B cell (primary cell): ENCODE measurements at regions of chr7 and their contacts with region 1.

Region 1: DNA sequence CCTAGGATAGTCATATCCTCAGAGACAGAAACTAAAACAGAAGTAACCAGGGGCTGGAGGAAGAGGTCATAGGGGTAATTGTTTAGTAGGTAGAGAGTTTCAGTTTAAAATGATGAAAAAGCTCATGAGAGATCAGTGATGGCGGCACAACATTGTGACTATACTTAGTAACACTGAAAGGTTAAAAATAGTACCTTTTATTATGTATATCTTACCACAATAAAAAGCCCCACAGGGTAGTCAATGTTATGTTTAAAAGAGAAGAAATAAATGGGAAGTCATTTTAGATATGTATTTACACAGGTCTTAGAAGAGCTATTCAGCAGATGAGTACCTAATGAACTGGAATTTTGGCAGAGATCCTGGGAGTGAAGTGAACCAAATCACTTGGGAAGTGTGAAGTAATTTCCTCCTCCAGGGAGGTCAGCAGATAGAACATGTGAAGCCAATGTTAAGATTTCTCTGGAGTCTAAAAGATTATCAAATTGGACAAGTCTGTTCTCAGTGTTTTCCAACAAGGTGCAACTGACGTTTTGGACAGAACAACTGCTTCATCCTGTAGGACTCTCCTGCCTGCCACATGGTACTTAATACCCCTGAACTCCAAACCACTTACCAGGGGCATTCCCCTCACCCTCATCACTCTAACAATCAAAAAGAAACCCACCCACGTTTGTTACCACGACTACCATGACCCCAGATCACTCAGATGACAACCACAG is 6.4 kb downstream of the CDCA7L start:
- DNase-seq: peak; percentile 68
- ATAC-seq: peak; percentile 42
- H3K4me3 ChIP-seq: peak overlapping the region in 1 of 5 experiments; percentile 6
- H3K4me3 Mint-ChIP-seq: peak overlapping the region; percentile 46
- H3K27ac ChIP-seq: peak overlapping the region; percentile 60 to 86
- H3K27ac Mint-ChIP-seq: peak overlapping the region; percentile 62
- H3K4me1 ChIP-seq: peaks cover 69 to 96% of the 10 kb centered on the region in 2 donors
- H3K4me1 Mint-ChIP-seq: peaks cover 86% of the 10 kb centered on the region
- H3K27me3 ChIP-seq: no peaks in the 10 kb centered on the region
- H3K27me3 Mint-ChIP-seq: no peaks in the 10 kb centered on the region
- CTCF ChIP-seq: no peak

Region 2: GRCh38 chr7:21923658-21924057 is 15.6 kb before region 1 on chr7:
- CTCF ChIA-PET with region 1: interaction called, 4 read pairs
- POLR2A ChIA-PET with region 1: interaction called, 3 read pairs
- intact Hi-C with region 1: loop called (anchors 2 kb)
- DNase-seq: no peak
- ATAC-seq: no peak
- H3K4me3 ChIP-seq: no peak overlapping the region
- H3K4me3 Mint-ChIP-seq: no peak overlapping the region
- H3K27ac ChIP-seq: no peak overlapping the region
- H3K27ac Mint-ChIP-seq: no peak overlapping the region
- H3K4me1 ChIP-seq: peaks cover 5 to 45% of the 10 kb centered on the region in 2 donors
- H3K4me1 Mint-ChIP-seq: peaks cover 78% of the 10 kb centered on the region
- H3K27me3 ChIP-seq: no peaks in the 10 kb centered on the region
- H3K27me3 Mint-ChIP-seq: no peaks in the 10 kb centered on the region
- CTCF ChIP-seq: no peak

Region 3: DNA sequence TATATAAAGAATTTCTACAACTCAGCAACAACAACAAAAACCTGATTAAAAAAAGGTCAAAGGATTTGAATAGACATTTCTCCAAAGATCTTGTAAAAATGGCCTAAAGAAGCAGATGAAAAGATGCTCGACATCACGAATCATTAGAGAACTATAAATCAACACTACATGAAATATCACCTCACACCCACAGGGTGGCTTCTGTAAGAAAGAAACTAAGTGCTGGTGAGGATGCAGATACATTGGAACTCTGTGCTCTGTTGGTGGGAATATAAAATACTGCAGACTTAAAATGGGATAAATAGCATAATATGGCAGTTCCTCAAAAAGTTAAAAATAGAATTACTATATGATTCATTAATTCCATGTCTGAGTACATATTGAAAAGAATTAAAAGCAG is 44.7 kb after region 1 on chr7:
- CTCF ChIA-PET with region 1: no interaction called
- POLR2A ChIA-PET with region 1: no interaction called
- intact Hi-C with region 1: no loop called
- DNase-seq: no peak
- ATAC-seq: no peak
- H3K4me3 ChIP-seq: no peak overlapping the region
- H3K4me3 Mint-ChIP-seq: no peak overlapping the region
- H3K27ac ChIP-seq: no peak overlapping the region
- H3K27ac Mint-ChIP-seq: no peak overlapping the region
- H3K4me1 ChIP-seq: no peaks in the 10 kb centered on the region
- H3K4me1 Mint-ChIP-seq: no peaks in the 10 kb centered on the region
- H3K27me3 ChIP-seq: no peaks in the 10 kb centered on the region
- H3K27me3 Mint-ChIP-seq: no peaks in the 10 kb centered on the region
- CTCF ChIP-seq: no peak

Region 4: DNA sequence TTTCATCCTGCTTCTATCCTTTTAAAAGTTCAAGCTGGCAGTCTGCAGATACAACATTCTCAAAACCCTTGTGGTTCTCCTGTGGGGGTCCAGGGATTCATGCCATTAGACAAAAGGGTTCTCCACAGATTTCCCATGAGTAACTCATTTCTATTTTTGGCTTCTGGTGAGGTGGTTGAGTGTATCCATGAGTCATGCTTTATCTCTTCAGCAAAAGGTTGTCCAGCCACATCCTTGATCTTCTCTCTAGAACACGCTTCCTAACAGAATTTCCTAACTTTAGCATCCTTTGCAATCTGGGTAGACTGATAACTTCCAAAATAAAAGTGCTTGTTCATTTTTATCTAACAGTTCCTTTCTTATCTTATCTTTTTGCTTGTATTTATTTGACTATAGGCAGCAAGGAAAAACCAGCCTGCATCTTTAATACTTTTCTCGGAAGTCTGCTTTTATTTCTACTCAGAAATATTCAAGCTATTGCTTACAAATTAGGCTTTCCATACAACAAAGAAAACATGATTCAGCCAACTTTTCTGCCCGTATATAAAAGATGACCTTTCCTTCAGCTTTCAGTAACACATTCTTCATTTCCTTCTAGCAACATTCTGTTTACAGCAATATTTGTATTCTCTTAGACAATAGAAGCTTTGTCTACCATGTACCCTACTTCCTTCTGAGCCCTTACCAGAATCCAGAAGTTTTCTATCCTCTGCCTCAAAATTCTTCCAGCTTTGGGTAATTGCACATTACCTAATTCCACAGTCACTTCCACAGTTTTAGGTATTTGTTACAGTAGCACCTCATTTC is 708.4 kb after region 1 on chr7:
- CTCF ChIA-PET with region 1: no interaction called
- POLR2A ChIA-PET with region 1: no interaction called
- intact Hi-C with region 1: no loop called
- DNase-seq: no peak
- ATAC-seq: no peak
- H3K4me3 ChIP-seq: no peak overlapping the region
- H3K4me3 Mint-ChIP-seq: no peak overlapping the region
- H3K27ac ChIP-seq: no peak overlapping the region
- H3K27ac Mint-ChIP-seq: no peak overlapping the region
- H3K4me1 ChIP-seq: no peaks in the 10 kb centered on the region
- H3K4me1 Mint-ChIP-seq: no peaks in the 10 kb centered on the region
- H3K27me3 ChIP-seq: no peaks in the 10 kb centered on the region
- H3K27me3 Mint-ChIP-seq: no peaks in the 10 kb centered on the region
- CTCF ChIP-seq: no peak